GM10248 (cell line): ENCODE measurements at regions of chr10 and their contacts with region 1.

Region 1: DNA sequence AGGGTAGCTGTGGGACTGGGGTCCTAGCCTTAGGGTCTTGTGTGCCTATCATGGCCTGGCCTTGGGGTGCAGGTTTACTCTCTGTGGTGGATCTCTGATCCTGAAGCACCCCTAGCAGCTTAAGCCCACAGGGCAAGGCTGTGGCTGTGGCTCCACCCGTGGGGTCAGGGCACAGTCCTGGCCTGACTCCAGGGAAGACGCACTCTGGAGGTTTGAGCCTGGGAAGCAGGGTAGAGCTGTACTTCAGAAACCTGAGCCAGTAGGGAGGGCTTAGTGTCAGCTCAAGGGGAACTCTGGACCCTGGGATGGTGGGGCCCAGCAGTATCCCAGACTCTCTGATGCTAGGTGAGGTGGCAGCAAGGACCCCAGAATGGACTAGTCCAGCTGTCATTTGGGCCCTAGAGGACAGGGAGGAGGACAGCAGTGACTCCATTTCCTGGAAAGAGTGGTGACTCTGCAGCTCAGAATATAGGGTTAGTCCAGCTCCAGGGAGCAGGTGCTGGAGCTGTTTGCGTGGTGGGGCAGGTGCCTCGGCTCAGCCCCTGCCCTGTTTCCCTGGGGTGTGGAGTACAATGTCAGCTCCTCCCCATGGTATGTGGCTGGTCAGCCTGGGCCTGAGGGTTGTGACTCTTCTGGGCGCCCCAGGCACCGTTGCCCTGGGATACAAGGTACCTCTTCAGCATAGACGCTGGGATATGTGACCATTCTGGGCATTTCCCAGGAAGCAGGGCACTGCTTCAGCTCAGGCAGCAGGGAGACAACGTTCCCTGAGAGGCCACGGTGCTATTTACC is 15.8 kb downstream of the GTPBP4 start:
- DNase-seq: no peak
- CTCF ChIP-seq: no peak

Region 2: DNA sequence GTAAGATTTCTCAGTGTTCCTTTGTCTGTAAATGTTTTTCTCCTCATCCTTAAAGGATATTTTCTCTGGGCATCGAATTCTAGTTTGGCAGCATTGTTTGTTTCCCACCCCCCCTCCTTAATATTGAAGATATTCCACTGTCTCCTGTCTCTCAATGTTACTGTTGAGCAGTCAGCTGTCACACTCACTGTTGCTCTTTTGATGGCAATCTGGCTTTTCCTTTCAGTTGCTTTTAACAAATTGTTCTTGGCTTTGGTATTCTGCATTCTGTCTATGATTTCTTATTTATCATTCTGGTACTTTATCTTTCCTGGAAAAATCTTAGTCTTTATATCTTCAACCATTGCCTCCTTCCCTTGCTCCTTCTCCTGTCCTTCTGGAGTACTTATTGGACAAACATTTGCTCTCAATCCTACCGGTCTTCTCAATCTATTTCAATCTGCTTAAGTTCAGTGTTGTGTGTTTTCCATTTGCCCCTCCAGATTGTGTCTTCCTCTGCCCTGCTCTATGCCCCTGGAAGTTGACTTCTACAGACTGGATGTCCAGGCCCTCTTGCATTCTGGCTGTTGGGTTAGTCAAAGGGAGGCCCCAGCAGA is 25.2 kb before region 1 on chr10:
- CTCF ChIA-PET with region 1: no interaction called
- POLR2A ChIA-PET with region 1: no interaction called
- DNase-seq: no peak
- CTCF ChIP-seq: no peak

Region 3: GRCh38 chr10:1015688-1016087 is 11.6 kb after region 1 on chr10:
- CTCF ChIA-PET with region 1: interaction called, 10 read pairs
- POLR2A ChIA-PET with region 1: no interaction called
- DNase-seq: no peak
- CTCF ChIP-seq: no peak

Region 4: DNA sequence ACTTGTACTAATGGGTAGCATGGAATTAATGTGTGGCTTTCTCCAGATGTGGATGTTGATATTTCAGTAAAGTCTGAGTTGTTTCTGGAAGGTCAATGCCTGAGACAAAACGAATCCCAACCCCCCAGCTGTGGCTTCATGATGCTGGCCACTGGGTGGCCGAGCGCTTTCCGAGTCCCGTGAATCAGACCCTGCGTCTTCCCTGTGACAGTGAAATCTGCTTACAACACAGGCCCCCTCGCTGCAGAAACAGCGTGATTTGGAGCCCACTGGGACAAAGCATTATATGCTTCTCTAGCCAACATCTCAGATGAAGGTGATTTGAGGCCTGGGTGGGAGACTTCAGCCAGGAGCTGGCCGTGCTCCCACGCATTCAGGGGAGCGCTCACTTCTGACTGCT is 176.8 kb after region 1 on chr10:
- CTCF ChIA-PET with region 1: no interaction called
- POLR2A ChIA-PET with region 1: no interaction called
- DNase-seq: no peak
- CTCF ChIP-seq: no peak